ENCODE measurements at regions of chr2 and their contacts with region 1.

Region 1: GRCh38 chr2:3518496-3519254 is 656 bp downstream of the ADI1 start:
- DNase-seq: peak; percentile 98

Region 2: GRCh38 chr2:3324404-3325281 is 194.0 kb before region 1 on chr2:
- intact Hi-C with region 1: no loop called
- DNase-seq: no peak

Region 3: GRCh38 chr2:3470166-3470651 is 48.5 kb before region 1 on chr2:
- intact Hi-C with region 1: loop called (anchors 5 kb)
- DNase-seq: peak; percentile 82

Region 4: GRCh38 chr2:3575534-3576262 is 57.0 kb after region 1 on chr2:
- intact Hi-C with region 1: loop called (anchors 5 kb)
- DNase-seq: no peak

Measured in cardiac septum (tissue), 1 donor.